Psoas muscle (tissue), 8 donors: ENCODE measurements at regions of chr6 and their contacts with region 1.

Region 1: DNA sequence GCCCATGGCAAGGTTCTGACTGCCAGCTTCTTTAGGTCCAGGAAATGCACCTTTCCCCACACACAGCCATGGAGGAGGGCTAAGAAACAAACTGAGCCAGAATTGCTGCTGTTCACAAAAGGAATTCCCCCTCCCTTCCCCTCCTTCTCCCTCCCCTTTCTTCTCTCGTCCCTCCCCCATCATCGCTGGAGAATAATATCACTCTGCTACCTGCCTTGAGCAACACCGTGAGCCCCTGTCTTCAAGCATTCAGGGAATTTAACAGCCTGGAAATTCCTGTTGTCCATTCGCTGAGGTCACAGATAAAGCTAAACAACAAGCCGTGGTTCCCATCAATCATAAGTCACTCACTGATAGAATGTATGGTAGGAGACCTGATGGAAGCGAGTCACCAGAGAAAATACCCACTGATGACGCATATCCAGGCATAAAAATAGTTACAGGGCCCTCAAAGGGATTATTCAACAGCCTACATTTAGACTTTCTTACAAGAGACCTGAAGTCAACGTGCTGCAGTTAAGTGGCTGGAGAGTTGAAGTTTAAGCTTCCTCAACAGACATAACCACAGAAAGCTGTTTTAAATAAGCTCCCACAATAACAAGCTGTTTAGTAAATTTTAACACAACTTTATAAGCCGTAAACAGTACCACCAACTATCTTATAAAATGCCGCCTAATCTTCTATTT is 59.7 kb downstream of the HIVEP2 start:
- DNase-seq: no peak
- ATAC-seq: peak; percentile 92 to 95 (median 94)
- H3K4me3 ChIP-seq: peak overlapping the region; percentile 59
- H3K27ac ChIP-seq: peak overlapping the region; percentile 84
- H3K4me1 ChIP-seq: peaks cover 68% of the 10 kb centered on the region
- H3K27me3 ChIP-seq: no peaks in the 10 kb centered on the region
- CTCF ChIP-seq: no peak

Region 2: GRCh38 chr6:142819603-142820337 is 65.6 kb before region 1 on chr6:
- intact Hi-C with region 1: loop called in 1 of 2 experiments (anchors 10 kb)
- DNase-seq: no peak
- ATAC-seq: no peak
- H3K4me3 ChIP-seq: peak overlapping the region; percentile 54
- H3K27ac ChIP-seq: peak overlapping the region; percentile 69
- H3K4me1 ChIP-seq: peaks cover 63% of the 10 kb centered on the region
- H3K27me3 ChIP-seq: no peaks in the 10 kb centered on the region
- CTCF ChIP-seq: no peak

Region 3: GRCh38 chr6:142845624-142846458 is 39.5 kb before region 1 on chr6:
- intact Hi-C with region 1: loop called in 1 of 2 experiments (anchors 5 kb)
- DNase-seq: peak; percentile 88 to 94
- ATAC-seq: peak; percentile 81 to 86 (median 84)
- H3K4me3 ChIP-seq: peak overlapping the region; percentile 59
- H3K27ac ChIP-seq: peak overlapping the region; percentile 89
- H3K4me1 ChIP-seq: peaks cover 83% of the 10 kb centered on the region
- H3K27me3 ChIP-seq: no peaks in the 10 kb centered on the region
- CTCF ChIP-seq: no peak

Region 4: GRCh38 chr6:142926494-142927270 is 41.4 kb after region 1 on chr6:
- intact Hi-C with region 1: loop called in 1 of 2 experiments (anchors 5 kb)
- DNase-seq: peak; percentile 87 to 93
- ATAC-seq: peak; percentile 86 to 92 (median 87)
- H3K4me3 ChIP-seq: peak overlapping the region; percentile 76
- H3K27ac ChIP-seq: peak overlapping the region; percentile 93
- H3K4me1 ChIP-seq: peaks cover 52% of the 10 kb centered on the region
- H3K27me3 ChIP-seq: no peaks in the 10 kb centered on the region
- CTCF ChIP-seq: no peak

Region 5: GRCh38 chr6:142987490-142987889 is 102.2 kb after region 1 on chr6:
- intact Hi-C with region 1: no loop called
- DNase-seq: no peak
- ATAC-seq: no peak
- H3K4me3 ChIP-seq: no peak overlapping the region
- H3K27ac ChIP-seq: no peak overlapping the region
- H3K4me1 ChIP-seq: no peaks in the 10 kb centered on the region
- H3K27me3 ChIP-seq: no peaks in the 10 kb centered on the region
- CTCF ChIP-seq: no peak

Region 6: GRCh38 chr6:143112084-143112768 is 226.9 kb after region 1 on chr6:
- intact Hi-C with region 1: no loop called
- DNase-seq: no peak
- ATAC-seq: no peak
- H3K4me3 ChIP-seq: no peak overlapping the region
- H3K27ac ChIP-seq: no peak overlapping the region
- H3K4me1 ChIP-seq: peaks cover 14% of the 10 kb centered on the region
- H3K27me3 ChIP-seq: no peaks in the 10 kb centered on the region
- CTCF ChIP-seq: no peak